ENCODE measurements at regions of chr5 and their contacts with region 1.

Region 1: DNA sequence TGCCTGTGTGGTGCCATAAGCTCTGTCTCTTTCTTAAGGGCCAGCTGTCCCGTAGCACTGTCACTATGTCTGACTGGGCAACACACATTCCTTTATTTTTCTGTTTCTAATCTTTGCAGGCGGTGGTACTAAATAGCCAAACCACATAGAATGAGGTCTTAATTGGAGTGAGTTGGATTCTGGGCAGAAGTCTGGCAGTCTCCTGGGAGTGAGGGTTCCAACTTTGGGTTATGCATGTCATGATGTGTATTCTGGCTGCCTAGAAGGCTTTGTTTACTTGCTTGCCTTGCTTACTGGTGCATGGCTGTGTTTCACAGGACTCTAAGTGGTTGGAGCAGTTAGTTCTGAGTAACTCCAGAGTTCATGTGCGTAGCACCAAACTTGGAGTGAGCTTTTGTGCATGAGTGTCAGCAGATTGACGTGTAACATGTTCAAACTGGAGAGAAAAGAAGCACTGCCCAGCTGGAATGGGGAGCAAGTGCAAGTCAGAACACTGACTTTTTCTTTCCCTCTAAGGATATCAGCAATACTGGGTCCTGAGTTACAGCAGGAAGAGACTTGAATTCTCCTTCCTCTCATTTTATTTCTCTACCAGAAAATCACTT is 185.8 kb downstream of the PCSK1 start:
- DNase-seq: peak; percentile 21
- ATAC-seq: peak; percentile 91 to 92

Region 2: DNA sequence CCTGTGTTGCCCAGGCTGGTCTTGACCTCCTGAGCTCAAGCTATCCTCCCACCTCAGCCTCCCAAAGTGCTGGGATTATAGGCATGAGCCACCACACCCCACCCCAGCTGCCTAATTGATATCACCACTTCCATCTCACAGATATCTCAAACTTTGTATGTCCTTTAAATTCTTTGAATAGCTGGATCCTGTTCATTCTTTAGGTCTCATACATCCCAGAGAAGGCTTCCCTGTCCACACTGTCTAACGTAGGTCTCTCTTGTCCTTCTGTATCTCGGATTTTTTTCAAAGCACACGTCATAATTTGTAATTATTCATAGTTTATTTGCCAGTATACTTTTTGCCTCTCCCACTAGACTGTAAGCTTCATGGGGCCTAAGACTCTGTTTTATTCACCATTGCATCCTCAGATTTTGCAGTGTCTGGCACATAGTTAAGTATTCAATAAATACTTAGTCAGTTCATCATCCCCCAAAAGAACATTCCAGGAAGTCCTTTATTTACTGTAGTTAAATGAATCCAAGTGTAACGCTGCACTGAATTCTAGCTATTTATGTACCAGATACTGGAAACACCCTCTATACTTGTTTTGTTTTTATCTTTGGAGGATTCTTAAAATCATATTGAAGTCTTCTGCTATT is 681.8 kb before region 1 on chr5:
- intact Hi-C with region 1: no loop called
- DNase-seq: no peak
- ATAC-seq: no peak

Region 3: DNA sequence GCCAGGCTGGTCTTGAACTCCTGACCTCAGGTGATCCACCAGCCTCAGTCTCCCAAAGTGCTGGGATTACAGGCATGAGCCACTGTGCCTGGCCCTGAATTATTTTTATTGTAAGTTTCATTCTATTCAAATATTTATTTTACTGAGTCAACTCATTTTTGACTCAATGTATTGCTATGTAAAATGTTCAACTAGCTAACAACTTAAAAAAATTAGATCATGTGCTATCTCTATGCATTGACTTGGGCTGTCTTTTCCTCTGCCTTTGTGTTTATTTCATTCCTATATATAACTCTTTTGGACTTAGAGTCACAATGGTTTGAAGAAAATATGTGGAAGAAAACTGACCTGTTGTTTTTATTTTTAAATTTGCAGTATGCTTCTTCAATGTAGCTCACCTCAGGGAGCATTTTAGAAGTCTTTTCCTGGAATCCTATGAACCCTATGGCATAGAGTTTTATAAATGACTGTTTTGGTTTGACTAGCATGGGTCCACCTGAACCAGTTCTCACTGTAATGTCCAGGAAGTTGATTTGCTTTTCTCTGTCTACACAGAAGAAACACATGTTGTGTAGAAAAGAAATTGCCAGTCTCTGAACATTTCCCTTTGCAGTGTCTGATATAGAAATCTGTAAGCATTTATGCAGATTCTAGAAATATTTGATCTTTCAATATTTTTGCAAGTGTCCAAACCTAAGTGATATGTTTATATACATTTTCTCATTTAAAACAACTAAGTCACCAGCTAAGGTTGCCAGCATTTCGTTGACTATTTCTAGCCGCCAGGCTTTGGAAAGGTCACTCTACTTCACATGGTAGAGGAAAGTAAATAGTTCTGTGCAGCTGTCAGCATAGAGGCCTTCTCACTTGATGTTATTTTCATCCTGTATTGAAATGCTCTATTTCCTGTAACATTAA is 47.0 kb after region 1 on chr5:
- intact Hi-C with region 1: loop called in 1 of 2 experiments (anchors 5 kb)
- DNase-seq: no peak
- ATAC-seq: peak in 1 of 2 donors; percentile 24

Measured in left cardiac atrium (tissue), 4 donors.